ENCODE measurements at regions of chr21 and their contacts with region 1.

Region 1: DNA sequence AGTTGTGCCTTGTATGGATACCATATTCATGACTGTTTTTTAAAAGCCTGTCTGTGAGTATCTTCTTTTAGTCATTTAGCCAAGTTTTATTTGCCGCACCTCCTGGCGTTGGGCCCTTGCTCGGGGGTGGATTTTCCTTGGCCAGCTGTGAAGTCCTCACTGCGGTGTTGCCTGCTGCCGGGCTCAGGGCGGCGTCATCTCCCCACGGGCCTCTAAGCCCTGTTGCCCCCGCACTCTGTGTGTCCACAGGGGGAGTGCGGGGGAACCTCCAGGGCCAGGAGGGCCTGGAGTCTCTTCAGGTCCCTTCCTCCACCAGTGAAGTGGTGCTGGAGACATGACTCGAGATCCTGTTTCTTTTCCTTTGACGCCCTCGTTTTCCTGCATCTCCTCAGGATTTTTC is 65.8 kb upstream of the DIP2A start:
- DNase-seq: peak; percentile 78 to 83
- ATAC-seq: peak; percentile 18 to 44 (median 32)
- H3K4me3 ChIP-seq: no peak overlapping the region
- H3K27ac ChIP-seq: peak overlapping the region; percentile 92
- H3K4me1 ChIP-seq: peaks cover 34% of the 10 kb centered on the region
- H3K27me3 ChIP-seq: no peaks in the 10 kb centered on the region
- CTCF ChIP-seq: no peak

Region 2: GRCh38 chr21:46188359-46189109 is 204.4 kb before region 1 on chr21:
- intact Hi-C with region 1: no loop called
- DNase-seq: peak; percentile 69 to 76
- ATAC-seq: peak; percentile 80 to 87 (median 84)
- H3K4me3 ChIP-seq: no peak overlapping the region
- H3K27ac ChIP-seq: peak overlapping the region; percentile 83
- H3K4me1 ChIP-seq: peaks cover 29% of the 10 kb centered on the region
- H3K27me3 ChIP-seq: no peaks in the 10 kb centered on the region
- CTCF ChIP-seq: no peak

Region 3: DNA sequence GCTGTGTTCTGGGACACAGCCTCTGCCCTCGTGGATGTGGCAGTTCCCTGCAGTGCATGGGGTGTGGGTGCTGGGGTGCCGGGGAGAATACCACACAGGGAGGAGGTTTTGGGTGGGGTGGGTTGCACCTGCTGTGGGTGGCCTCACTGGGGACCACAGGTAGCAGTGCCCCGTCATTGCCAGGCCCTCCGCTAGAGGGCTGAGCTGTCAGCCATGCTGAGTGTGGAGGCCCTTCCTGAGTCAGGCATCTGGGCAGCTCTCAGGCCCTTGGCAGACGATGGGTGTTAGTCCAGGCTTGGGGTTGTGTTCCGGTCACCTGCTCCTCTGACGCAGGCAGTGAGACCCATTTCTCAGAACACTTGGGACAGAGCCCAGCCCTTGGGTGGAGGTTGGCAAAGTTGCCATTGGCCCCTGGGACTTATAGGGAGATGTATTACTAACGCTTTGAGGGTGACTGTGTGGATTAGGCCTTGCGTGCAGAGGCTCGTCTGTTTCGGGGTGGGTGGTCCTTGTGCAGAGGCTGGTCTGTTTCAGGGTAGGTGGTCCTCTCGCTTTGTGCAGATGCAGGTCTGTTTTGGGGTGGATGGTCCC is 45.0 kb before region 1 on chr21:
- intact Hi-C with region 1: loop called in 1 of 2 experiments (anchors 2 kb)
- DNase-seq: peak; percentile 89 to 97
- ATAC-seq: peak; percentile 86 to 95 (median 91)
- H3K4me3 ChIP-seq: peak overlapping the region; percentile 77
- H3K27ac ChIP-seq: peak overlapping the region; percentile 95
- H3K4me1 ChIP-seq: peaks cover 29% of the 10 kb centered on the region
- H3K27me3 ChIP-seq: no peaks in the 10 kb centered on the region
- CTCF ChIP-seq: peak; percentile 78

Region 4: GRCh38 chr21:46375560-46376230 is 17.2 kb before region 1 on chr21:
- intact Hi-C with region 1: loop called in 1 of 2 experiments (anchors 2 kb)
- DNase-seq: peak; percentile 76 to 93
- ATAC-seq: peak; percentile 57 to 78 (median 64)
- H3K4me3 ChIP-seq: peak overlapping the region; percentile 60
- H3K27ac ChIP-seq: peak overlapping the region; percentile 96
- H3K4me1 ChIP-seq: peaks cover 51% of the 10 kb centered on the region
- H3K27me3 ChIP-seq: no peaks in the 10 kb centered on the region
- CTCF ChIP-seq: no peak

Region 5: DNA sequence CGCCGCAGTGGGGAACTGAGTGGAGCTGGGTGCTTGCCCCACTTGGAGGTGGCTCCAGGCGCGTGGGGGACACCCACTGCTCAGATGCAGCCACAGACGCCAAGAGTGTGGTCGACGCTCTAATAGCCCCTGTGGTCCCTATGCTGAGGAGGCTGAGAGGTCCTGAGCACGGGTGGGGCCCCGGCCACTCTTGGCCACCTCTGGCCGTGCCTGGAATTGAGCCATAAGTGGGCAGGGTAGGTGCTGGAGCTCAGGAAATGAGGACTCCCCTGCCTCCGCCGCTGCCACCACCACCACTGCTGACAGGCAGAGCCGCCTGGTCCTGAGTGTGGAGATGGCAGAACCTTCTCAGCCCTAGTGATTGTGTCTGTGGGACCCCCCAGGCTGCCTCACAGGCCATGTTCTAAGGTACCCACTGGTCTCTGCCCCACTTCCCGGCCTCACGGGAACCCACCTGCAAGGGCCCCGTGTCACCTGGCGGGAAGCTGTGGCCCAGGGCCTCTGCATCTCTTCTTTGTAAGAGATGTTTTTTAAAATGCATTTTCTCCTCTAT is 31.2 kb after region 1 on chr21:
- intact Hi-C with region 1: no loop called
- DNase-seq: peak in 1 of 2 donors; percentile 42
- ATAC-seq: peak in 3 of 4 donors; percentile 4 to 11 (median 6)
- H3K4me3 ChIP-seq: no peak overlapping the region
- H3K27ac ChIP-seq: no peak overlapping the region
- H3K4me1 ChIP-seq: no peaks in the 10 kb centered on the region
- H3K27me3 ChIP-seq: no peaks in the 10 kb centered on the region
- CTCF ChIP-seq: no peak

Region 6: GRCh38 chr21:46532080-46532479 is 139.2 kb after region 1 on chr21:
- intact Hi-C with region 1: no loop called
- DNase-seq: no peak
- ATAC-seq: no peak
- H3K4me3 ChIP-seq: no peak overlapping the region
- H3K27ac ChIP-seq: no peak overlapping the region
- H3K4me1 ChIP-seq: no peaks in the 10 kb centered on the region
- H3K27me3 ChIP-seq: no peaks in the 10 kb centered on the region
- CTCF ChIP-seq: no peak

Measured in psoas muscle (tissue), 8 donors.